ENCODE measurements at regions of chr2 and their contacts with region 1.

Region 1: DNA sequence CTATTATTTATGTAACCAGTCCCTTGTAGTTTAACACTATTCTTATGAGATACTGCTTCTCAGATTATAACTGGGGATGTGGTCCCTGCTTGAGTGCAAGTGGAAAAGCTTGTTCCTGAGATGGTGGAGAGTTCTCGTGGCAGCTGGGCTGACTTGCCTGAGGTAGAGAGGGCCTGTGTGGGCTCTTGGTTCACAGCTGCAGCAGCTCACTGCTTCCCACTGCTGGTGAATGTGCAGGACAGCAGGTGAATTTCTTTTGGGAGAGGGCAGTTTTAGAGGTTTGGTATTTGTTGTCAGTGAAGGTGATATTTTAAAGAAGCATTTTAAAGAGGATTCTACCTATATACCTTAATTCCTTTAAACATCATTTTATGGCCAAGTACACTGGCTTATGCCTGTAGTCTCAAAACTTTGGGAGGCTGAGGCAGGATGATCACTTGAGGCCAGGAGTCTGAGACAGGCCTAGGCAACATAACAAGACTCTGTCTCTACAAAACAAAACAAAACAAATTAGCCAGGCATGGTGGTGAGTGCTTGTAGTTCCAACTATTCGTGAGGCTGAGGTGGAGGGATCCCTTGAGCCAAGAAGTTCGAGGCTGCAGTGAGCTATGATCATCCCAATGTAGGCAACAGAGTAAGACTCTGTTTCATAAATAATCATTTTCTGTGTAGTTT is 94.8 kb downstream of the MTA3 start:
- DNase-seq: peak; percentile 64 to 73
- H3K4me3 ChIP-seq: no peak overlapping the region
- H3K27ac ChIP-seq: no peak overlapping the region
- H3K4me1 ChIP-seq: no peaks in the 10 kb centered on the region
- H3K27me3 ChIP-seq: no peaks in the 10 kb centered on the region
- CTCF ChIP-seq: peak; percentile 100

Region 2: GRCh38 chr2:41840702-41841551 is 822.3 kb before region 1 on chr2:
- CTCF ChIA-PET with region 1: no interaction called
- POLR2A ChIA-PET with region 1: no interaction called
- intact Hi-C with region 1: loop called (anchors 5 kb)
- DNase-seq: peak; percentile 97
- H3K4me3 ChIP-seq: peak overlapping the region; percentile 74
- H3K27ac ChIP-seq: no peak overlapping the region
- H3K4me1 ChIP-seq: peaks cover 13% of the 10 kb centered on the region
- H3K27me3 ChIP-seq: no peaks in the 10 kb centered on the region
- CTCF ChIP-seq: peak; percentile 99

Region 3: GRCh38 chr2:42238644-42239288 is 424.5 kb before region 1 on chr2:
- CTCF ChIA-PET with region 1: interaction called, 10 read pairs
- POLR2A ChIA-PET with region 1: no interaction called
- intact Hi-C with region 1: no loop called
- DNase-seq: peak; percentile 32 to 43
- H3K4me3 ChIP-seq: no peak overlapping the region
- H3K27ac ChIP-seq: peak overlapping the region; percentile 13; the same call in 1 of the 2 replicates
- H3K4me1 ChIP-seq: peaks cover 6% of the 10 kb centered on the region; the same call in 1 of the 2 replicates
- H3K27me3 ChIP-seq: no peaks in the 10 kb centered on the region
- CTCF ChIP-seq: peak; percentile 69

Region 4: DNA sequence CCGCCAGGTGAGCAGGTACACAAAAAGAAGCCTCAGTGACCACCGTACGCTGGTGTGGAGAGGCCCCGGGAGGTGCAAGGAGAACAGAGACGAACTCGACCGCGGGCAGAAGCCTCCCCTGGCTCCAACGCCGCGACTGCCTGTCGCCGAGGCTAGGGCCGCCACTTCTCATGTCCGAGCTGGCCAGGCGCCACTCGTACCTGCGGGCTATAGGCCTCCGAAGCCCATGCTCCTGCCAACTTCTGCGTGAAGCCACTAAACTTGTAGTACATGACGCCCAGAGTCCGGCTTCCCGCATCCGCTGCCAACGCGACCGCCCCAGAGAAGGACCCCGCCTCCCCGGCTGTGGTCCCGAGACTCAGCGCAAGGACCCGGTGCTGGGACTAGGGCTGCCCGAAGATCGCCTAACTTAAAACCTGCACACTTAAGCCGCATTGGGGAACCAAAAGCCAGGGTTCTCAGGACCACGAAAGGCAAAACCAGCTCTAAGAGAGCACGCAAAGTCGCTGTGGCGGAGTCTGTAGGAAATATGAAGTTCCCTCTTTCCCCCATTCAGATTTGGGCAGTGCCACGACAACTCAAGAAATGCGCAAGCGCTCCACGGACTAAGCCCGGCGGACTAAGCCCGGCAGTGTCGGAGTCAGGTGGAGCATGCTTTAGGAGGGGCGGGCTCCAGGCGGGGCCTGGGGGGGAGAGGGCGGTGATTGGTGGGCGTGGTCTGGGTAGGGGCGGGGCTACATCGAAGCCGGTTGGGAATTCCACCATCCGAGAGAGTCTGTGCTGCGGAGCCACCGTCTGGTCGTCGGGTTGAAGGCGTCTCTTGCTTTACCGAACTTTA is 302.1 kb before region 1 on chr2 and contains the start of gene COX7A2L:
- CTCF ChIA-PET with region 1: no interaction called
- POLR2A ChIA-PET with region 1: interaction called, 7 read pairs
- intact Hi-C with region 1: loop called (anchors 1 kb)
- DNase-seq: peak; percentile 91 to 97
- H3K4me3 ChIP-seq: peak within 1 kb of the TSS; percentile 89
- H3K27ac ChIP-seq: peak within 1 kb of the TSS; percentile 75
- H3K4me1 ChIP-seq: peaks cover 27% of the 10 kb centered on the region
- H3K27me3 ChIP-seq: no peaks in the 10 kb centered on the region
- CTCF ChIP-seq: no peak
- total RNA-seq, gene COX7A2L: 141 and 144 TPM in 2 replicates

Region 5: DNA sequence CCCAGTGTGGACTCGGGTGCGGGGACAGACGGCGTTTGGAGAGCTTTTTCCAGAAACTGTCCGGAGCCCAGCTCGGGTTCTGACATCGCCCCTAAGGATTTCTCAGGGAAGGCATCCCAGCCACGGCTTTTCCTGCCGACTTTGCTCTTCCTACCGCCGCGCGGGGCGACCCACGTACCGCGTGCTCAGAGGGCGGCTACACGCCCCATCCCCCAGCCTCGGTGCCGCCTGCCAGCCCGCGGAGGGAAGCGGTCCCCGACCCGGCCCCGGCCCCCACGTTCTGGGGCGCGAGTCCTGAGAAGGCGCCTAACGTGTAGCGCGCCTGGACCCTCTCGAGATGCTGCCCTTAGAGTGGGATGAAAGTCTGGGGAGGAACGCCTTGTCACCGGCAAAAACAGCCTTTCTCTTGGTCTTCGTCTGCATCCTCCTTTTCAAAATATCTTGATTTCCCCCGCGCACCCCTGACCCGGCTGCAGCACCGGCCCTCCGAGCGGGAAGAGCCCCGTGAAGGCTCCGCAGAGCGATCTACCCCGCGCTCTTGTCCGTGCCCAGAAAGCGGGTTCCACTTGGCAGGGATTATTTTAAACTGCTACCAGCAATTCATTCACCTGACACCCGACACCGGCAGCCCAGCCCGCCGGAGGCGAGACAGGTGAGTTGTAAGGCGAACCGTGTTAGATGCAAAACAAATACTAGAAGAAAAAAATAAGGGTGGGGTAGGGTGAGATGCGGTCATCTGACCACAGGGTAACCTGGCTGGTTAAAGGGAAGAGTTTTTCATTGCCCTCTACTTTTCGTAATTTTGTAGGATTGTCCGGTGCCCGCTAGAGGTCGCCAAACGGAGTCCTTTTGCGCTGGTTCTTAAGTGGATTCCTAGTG is 168.6 kb before region 1 on chr2:
- CTCF ChIA-PET with region 1: interaction called, 4 read pairs
- POLR2A ChIA-PET with region 1: no interaction called
- intact Hi-C with region 1: loop called (anchors 1 kb)
- DNase-seq: peak; percentile 93 to 99
- H3K4me3 ChIP-seq: peak overlapping the region; percentile 89
- H3K27ac ChIP-seq: peak overlapping the region; percentile 68
- H3K4me1 ChIP-seq: peaks cover 25% of the 10 kb centered on the region
- H3K27me3 ChIP-seq: no peaks in the 10 kb centered on the region
- CTCF ChIP-seq: peak; percentile 96

Region 6: DNA sequence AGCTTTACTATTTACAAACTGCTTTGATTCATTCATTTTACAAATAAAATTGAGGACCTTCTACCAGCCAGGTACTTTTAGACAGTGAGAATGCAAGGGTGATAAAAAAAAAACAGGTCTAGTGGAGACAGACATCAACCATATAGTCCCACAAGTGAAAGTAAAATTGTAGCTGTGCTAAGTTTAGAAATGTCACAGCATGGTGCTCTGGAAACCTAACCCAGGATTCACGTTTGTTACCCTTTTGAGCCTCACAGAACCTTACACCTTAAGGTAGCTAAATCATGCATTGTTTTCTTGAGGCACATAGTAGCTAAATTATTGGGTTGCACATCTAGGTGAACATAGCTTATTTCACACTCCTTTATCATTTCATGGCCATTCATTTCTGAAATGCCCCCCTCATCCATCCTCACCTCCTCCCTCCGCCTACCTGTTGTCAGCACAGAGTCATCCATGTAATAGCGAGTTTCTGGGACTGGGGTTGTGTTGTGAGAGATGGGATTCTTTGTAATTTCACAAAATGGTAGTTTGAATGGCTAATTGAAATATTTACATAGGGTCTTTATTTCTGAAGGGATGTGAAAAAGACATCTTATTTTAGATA is 87.7 kb before region 1 on chr2:
- CTCF ChIA-PET with region 1: no interaction called
- POLR2A ChIA-PET with region 1: no interaction called
- intact Hi-C with region 1: no loop called
- DNase-seq: no peak
- H3K4me3 ChIP-seq: no peak overlapping the region
- H3K27ac ChIP-seq: no peak overlapping the region
- H3K4me1 ChIP-seq: peaks cover 9% of the 10 kb centered on the region; the same call in 1 of the 2 replicates
- H3K27me3 ChIP-seq: no peaks in the 10 kb centered on the region
- CTCF ChIP-seq: no peak

Region 7: GRCh38 chr2:42652086-42652485 is 11.2 kb before region 1 on chr2:
- CTCF ChIA-PET with region 1: no interaction called
- POLR2A ChIA-PET with region 1: interaction called, 40 read pairs
- intact Hi-C with region 1: no loop called
- DNase-seq: no peak
- H3K4me3 ChIP-seq: no peak overlapping the region
- H3K27ac ChIP-seq: no peak overlapping the region
- H3K4me1 ChIP-seq: no peaks in the 10 kb centered on the region
- H3K27me3 ChIP-seq: no peaks in the 10 kb centered on the region
- CTCF ChIP-seq: no peak

Region 8: GRCh38 chr2:42878581-42878980 is 215.3 kb after region 1 on chr2:
- CTCF ChIA-PET with region 1: no interaction called
- POLR2A ChIA-PET with region 1: no interaction called
- intact Hi-C with region 1: no loop called
- DNase-seq: no peak
- H3K4me3 ChIP-seq: no peak overlapping the region
- H3K27ac ChIP-seq: no peak overlapping the region
- H3K4me1 ChIP-seq: no peaks in the 10 kb centered on the region
- H3K27me3 ChIP-seq: no peaks in the 10 kb centered on the region
- CTCF ChIP-seq: no peak

Measured in PC-9 (cell line).